ENCODE measurements at regions of chr12 and their contacts with region 1.

Region 1: GRCh38 chr12:8544295-8544694 is 3.6 kb upstream of the CLEC4E start:
- DNase-seq: peak; percentile 26
- H3K4me3 ChIP-seq: no peak overlapping the region
- H3K27ac ChIP-seq: no peak overlapping the region
- H3K27me3 ChIP-seq: no peaks in the 10 kb centered on the region
- CTCF ChIP-seq: peak; percentile 94

Region 2: GRCh38 chr12:8527250-8528130 is 16.8 kb before region 1 on chr12:
- CTCF ChIA-PET with region 1: interaction called, 18 read pairs
- POLR2A ChIA-PET with region 1: no interaction called
- DNase-seq: no peak
- H3K4me3 ChIP-seq: no peak overlapping the region
- H3K27ac ChIP-seq: no peak overlapping the region
- H3K27me3 ChIP-seq: no peaks in the 10 kb centered on the region
- CTCF ChIP-seq: no peak

Region 3: DNA sequence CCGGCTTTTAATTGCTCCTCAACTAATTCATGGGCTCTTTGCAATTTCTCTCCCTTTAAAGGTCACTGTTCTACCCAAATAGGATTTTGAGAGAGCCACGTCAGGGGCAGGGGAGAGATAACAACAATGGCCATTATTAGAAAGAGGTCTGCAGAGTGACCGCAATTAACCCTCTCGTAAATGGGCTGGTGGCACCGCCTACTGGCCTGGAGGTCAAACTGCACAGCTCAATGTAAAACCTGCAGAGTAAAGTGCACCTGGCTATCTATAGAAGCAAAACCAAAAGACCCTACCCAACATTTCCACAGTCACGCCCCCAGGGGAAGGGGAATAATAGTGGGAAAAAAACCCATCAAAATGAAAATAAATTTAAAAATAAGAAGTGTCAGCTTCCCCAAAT is 18.0 kb after region 1 on chr12:
- CTCF ChIA-PET with region 1: interaction called, 24 read pairs
- POLR2A ChIA-PET with region 1: no interaction called
- DNase-seq: no peak
- H3K4me3 ChIP-seq: no peak overlapping the region
- H3K27ac ChIP-seq: no peak overlapping the region
- H3K27me3 ChIP-seq: no peaks in the 10 kb centered on the region
- CTCF ChIP-seq: 0 out of 2 replicates have a peak, but pooled peaks have one; percentile 10

Region 4: DNA sequence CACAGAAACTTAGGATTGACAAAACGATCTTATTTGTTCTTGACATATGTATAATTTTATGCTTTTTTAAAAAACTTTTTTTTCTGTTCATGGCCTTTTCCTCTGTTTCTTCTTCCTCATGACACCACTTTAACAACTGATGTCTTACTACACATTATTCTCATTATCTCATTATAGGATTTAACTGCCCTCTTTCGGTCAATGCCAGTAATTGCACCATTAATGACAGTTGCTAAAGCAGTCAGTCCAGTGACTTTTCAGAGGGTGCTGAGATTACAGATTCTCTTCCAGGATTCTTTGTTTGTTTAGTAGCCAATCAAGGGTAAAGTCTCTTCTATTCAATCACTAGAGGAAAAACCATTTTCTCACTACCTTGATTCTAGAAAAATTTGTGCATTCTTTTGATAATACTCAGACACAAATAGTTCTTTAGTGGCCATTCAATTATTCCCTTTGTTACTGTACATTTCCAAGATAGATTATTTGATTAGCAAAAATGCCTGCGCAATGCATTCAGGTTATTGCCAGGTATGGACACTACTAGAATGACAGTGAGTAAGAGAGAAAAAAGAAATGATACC is 495.2 kb after region 1 on chr12:
- CTCF ChIA-PET with region 1: interaction called, 12 read pairs
- POLR2A ChIA-PET with region 1: no interaction called
- DNase-seq: peak; percentile 4
- H3K4me3 ChIP-seq: no peak overlapping the region
- H3K27ac ChIP-seq: no peak overlapping the region
- H3K27me3 ChIP-seq: no peaks in the 10 kb centered on the region
- CTCF ChIP-seq: peak; percentile 75

Region 5: GRCh38 chr12:10276774-10277173 is 1732.5 kb after region 1 on chr12:
- CTCF ChIA-PET with region 1: no interaction called
- POLR2A ChIA-PET with region 1: no interaction called
- DNase-seq: no peak
- H3K4me3 ChIP-seq: no peak overlapping the region
- H3K27ac ChIP-seq: no peak overlapping the region
- H3K27me3 ChIP-seq: no peaks in the 10 kb centered on the region
- CTCF ChIP-seq: no peak

Measured in AG04450 (cell line).